Right cardiac atrium (tissue), 5 donors: ENCODE measurements at regions of chr1 and their contacts with region 1.

Region 1: GRCh38 chr1:71196685-71197084 is 115.8 kb upstream of the ZRANB2 start:
- DNase-seq: no peak
- ATAC-seq: no peak
- H3K4me3 ChIP-seq: no peak overlapping the region
- H3K27ac ChIP-seq: no peak overlapping the region
- H3K4me1 ChIP-seq: no peaks in the 10 kb centered on the region
- H3K27me3 ChIP-seq: no peaks in the 10 kb centered on the region

Region 2: DNA sequence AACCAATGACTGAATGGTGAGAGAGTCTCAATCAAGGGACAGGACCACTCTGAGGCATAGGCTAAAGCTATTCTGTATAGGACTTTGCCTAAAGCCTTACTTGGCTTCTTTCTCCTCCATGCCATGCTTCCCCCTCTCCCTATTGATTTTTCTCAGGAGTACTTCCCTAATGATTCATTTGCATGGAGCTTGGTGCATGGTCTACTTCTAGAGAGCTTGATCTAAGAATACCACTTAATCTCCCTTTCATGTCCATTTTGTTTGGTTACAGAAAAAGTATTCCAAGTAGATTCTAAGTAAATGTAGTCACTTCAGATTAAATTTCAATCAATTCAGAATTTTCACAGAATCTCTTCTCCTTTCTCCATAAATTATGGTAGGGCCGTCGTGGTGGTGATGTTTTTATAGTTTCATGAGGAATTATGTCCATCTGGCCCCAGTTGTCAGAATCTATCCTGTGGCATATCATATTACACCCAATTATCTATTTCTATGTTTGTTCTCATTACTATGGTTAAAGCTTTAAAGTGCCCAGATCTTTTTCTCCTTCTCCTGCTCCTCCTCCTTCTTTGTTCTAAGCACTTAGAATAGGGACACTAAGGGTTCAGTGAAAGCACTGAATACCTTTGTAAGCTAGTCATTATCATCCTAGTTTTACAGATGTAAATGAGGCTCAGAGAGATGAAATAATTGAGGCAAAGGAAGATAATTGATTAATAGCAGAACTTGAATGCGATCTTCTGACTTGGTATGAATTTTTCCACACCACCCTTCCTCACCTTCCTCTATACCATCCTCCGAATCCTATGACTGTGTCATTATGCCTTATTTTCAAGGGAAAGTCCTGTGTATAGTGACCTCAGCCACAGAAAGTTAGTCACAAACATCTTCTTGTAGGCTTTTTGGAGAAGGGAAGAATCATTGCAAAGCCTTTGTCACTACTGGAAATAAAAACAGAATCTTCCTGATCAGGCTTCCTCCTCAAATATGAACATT is 30.2 kb before region 1 on chr1:
- intact Hi-C with region 1: no loop called
- DNase-seq: no peak
- ATAC-seq: no peak
- H3K4me3 ChIP-seq: no peak overlapping the region
- H3K27ac ChIP-seq: no peak overlapping the region
- H3K4me1 ChIP-seq: no peaks in the 10 kb centered on the region
- H3K27me3 ChIP-seq: no peaks in the 10 kb centered on the region

Region 3: DNA sequence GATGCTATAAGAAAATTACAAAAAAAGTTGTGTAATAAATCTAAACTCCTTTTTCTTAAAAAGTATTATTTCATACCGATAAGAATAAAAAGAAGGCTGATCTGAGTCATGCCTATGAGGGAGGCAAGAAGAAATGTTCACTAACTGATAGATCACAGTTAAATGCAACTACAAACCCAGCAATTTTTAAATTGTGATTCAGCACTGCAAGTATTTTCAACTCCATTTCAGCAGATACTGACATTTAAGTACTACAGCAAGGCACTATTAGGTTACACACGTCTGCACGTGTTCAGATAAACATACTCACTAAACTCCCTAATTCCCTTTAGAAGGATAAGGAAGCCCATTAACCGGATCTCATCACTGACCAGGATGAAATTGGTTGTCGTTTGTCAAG is 97.5 kb after region 1 on chr1:
- intact Hi-C with region 1: no loop called
- DNase-seq: no peak
- ATAC-seq: no peak
- H3K4me3 ChIP-seq: no peak overlapping the region
- H3K27ac ChIP-seq: no peak overlapping the region
- H3K4me1 ChIP-seq: no peaks in the 10 kb centered on the region
- H3K27me3 ChIP-seq: no peaks in the 10 kb centered on the region

Region 4: GRCh38 chr1:71422221-71422620 is 225.5 kb after region 1 on chr1:
- intact Hi-C with region 1: no loop called
- DNase-seq: no peak
- ATAC-seq: no peak
- H3K4me3 ChIP-seq: no peak overlapping the region
- H3K27ac ChIP-seq: no peak overlapping the region
- H3K4me1 ChIP-seq: no peaks in the 10 kb centered on the region
- H3K27me3 ChIP-seq: no peaks in the 10 kb centered on the region

Region 5: GRCh38 chr1:71521655-71522264 is 325.1 kb after region 1 on chr1:
- intact Hi-C with region 1: loop called (anchors 5 to 10 kb)
- DNase-seq: peak; percentile 16 to 76 (median 27)
- ATAC-seq: peak; percentile 33 to 52
- H3K4me3 ChIP-seq: no peak overlapping the region
- H3K27ac ChIP-seq: no peak overlapping the region
- H3K4me1 ChIP-seq: no peaks in the 10 kb centered on the region
- H3K27me3 ChIP-seq: no peaks in the 10 kb centered on the region

Region 6: GRCh38 chr1:71526824-71527223 is 330.1 kb after region 1 on chr1:
- intact Hi-C with region 1: loop called (anchors 5 to 10 kb)
- DNase-seq: no peak
- ATAC-seq: no peak
- H3K4me3 ChIP-seq: no peak overlapping the region
- H3K27ac ChIP-seq: no peak overlapping the region
- H3K4me1 ChIP-seq: no peaks in the 10 kb centered on the region
- H3K27me3 ChIP-seq: no peaks in the 10 kb centered on the region